ENCODE measurements at regions of chr4 and their contacts with region 1.

Region 1: GRCh38 chr4:87840149-87840548 is 7.4 kb downstream of the MEPE start:
- DNase-seq: no peak
- ATAC-seq: no peak

Region 2: DNA sequence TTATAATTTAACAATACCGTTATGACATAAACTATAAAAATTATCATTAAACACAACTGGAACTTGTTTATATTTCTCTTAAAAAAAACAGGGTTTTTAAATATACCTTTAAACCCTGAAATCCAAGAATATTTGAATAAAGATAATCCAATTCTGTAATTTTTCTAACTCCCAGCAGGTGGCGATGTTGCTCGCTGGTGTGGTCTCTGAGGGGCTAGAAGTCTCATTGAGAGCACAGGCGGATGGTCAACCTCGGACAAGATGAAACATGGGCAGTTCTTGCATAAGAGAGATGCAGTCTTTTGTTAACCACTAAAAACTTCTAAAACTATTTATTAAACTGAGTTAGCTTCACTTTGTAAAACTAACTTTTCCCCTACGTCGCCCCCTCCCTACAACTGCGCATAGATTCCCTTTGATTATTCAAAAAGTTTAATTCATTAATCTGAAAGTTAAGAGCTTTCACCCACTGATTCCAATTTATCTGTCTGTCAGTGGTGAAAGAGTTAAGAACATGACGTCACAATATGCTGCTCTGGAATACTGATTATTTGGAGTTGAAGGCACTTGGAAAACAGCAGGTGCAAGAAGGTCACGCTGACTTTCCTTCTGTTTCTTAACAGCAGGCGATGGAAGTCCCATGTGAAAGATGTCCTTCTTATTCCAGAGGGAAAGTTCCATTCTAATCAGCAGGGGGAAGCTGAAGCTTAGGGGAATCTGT is 160.5 kb before region 1 on chr4:
- intact Hi-C with region 1: loop called (anchors 2 to 5 kb)
- DNase-seq: peak; percentile 60
- ATAC-seq: peak; percentile 78 to 81